ENCODE measurements at regions of chr19 and their contacts with region 1.

Region 1: DNA sequence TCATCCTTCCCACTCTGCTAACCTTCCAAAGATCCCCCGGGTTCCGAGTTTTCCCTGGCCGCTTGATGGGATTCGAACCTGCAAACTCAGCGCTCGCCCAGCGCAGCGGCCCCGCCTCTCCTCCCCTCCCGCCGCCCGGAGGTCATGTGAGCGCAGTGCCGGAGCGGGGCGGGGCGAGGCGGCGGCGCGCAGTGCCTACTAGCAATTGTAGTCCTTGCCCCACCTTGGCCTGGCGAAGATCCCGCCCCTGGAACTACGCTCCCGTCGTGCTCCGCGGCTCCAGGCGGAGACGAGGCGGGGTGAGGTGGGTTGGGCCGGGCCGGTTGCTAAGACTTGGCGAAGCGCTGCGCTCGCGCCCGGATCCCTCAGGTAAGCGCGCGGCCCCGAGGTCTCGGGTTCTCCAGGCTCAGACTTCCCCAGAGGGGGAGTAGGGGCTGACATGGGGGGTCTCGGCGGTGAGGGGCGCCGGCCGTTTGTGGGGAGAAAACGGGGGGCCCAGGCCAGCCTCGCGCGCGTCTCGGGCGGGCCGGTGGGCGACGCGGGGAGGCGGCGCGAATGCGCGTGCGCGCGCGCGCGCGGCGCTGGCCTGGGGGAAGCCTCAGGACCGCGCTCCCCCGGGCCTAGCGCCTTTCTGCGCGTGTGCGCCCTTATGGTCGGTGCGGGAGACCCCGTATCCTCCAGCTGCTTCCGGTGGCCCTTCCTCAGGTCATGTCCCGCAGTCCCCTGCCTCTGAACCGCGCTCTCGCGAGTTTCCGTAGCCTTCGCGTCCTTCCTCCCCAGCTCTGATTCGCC is at the starts of genes ADAT3 and SCAMP4:
- DNase-seq: peak; percentile 92 to 99 (median 98)
- ATAC-seq: peak; percentile 95 to 99 (median 98)
- H3K4me3 ChIP-seq: peak within 1 kb of the TSS; percentile 67 to 69
- H3K4me3 Mint-ChIP-seq: peak within 1 kb of the TSS; percentile 85 to 92 (median 87)
- H3K27ac ChIP-seq: peak within 1 kb of the TSS; percentile 77
- H3K27ac Mint-ChIP-seq: peak within 1 kb of the TSS; percentile 88
- H3K4me1 ChIP-seq: peaks cover 11 to 55% of the 10 kb centered on the region in 2 experiments
- H3K4me1 Mint-ChIP-seq: peaks cover 38 to 50% (median 45%) of the 10 kb centered on the region in 3 donors
- H3K27me3 ChIP-seq: no peaks in the 10 kb centered on the region
- H3K27me3 Mint-ChIP-seq: no peaks in the 10 kb centered on the region
- total RNA-seq, gene ADAT3: 6.0 to 16.1 (median 7.7) TPM
- total RNA-seq, gene SCAMP4: 24.8 to 49.2 (median 27.5) TPM

Region 2: GRCh38 chr19:3607303-3608078 is 1702.2 kb after region 1 on chr19:
- CTCF ChIA-PET with region 1: no interaction called
- POLR2A ChIA-PET with region 1: interaction called in 1 of 2 experiments, 10 read pairs
- DNase-seq: no peak
- ATAC-seq: no peak
- H3K4me3 ChIP-seq: no peak overlapping the region
- H3K4me3 Mint-ChIP-seq: peak overlapping the region in 2 of 3 donors; percentile 57 to 66
- H3K27ac ChIP-seq: no peak overlapping the region
- H3K27ac Mint-ChIP-seq: peak overlapping the region; percentile 72 to 73
- H3K4me1 ChIP-seq: peaks cover 10 to 56% of the 10 kb centered on the region in 2 experiments
- H3K4me1 Mint-ChIP-seq: peaks cover 8 to 13% (median 12%) of the 10 kb centered on the region in 3 donors
- H3K27me3 ChIP-seq: peaks cover 0 to 39% of the 10 kb centered on the region in 2 experiments
- H3K27me3 Mint-ChIP-seq: no peaks in the 10 kb centered on the region

Measured in T-cell (primary cell).